Activated T-helper 1 cell treated with anti-CD3 and anti-CD28 coated beads, Interleukin-12 subunit alpha, Interleukin-12 subunit beta, Interleukin-2, Interleukin-4 antibody, amounts not matched to agents 30 ng/mL and 10 ng/mL and 1 ng/mL, durations not matched to agents 14 hours and 24 hours and 36 hours (primary cell): ENCODE measurements at regions of chr2 and their contacts with region 1.

Region 1: DNA sequence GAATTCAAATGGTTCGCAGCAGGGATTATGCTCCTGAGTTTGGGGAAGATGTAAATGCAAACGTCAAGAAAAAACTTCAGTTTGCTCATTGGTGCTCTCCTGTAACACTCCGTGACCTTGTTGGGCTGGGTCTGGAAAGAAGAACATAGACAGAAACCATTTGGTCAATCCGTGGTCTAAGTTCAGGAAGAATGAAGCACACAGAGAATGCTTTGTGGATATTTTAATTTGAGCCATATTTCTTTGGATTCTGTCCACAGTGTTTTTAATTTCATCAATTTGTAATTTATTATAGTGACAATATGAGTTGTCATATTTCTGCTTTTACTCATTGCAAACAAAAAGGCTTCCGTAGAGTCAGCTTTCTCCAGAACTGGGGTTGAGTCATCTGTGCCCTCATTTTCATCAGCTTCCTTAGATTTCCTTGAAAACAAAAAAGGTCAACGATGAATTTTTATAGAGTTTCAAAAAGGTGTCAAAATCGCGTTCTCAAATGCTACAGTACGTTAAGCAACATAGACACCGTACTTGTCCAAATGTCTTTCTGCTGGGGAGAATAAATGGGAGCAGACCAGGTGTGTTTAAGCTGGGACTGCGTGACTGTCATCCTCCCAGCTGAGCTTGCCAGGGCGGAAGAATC is 606.4 kb downstream of the RNF144A start:
- DNase-seq: no peak
- H3K4me3 Mint-ChIP-seq: peak overlapping the region; percentile 2
- H3K27ac Mint-ChIP-seq: peak overlapping the region; percentile 90
- H3K4me1 Mint-ChIP-seq: peaks cover 77% of the 10 kb centered on the region
- H3K27me3 Mint-ChIP-seq: no peaks in the 10 kb centered on the region

Region 2: DNA sequence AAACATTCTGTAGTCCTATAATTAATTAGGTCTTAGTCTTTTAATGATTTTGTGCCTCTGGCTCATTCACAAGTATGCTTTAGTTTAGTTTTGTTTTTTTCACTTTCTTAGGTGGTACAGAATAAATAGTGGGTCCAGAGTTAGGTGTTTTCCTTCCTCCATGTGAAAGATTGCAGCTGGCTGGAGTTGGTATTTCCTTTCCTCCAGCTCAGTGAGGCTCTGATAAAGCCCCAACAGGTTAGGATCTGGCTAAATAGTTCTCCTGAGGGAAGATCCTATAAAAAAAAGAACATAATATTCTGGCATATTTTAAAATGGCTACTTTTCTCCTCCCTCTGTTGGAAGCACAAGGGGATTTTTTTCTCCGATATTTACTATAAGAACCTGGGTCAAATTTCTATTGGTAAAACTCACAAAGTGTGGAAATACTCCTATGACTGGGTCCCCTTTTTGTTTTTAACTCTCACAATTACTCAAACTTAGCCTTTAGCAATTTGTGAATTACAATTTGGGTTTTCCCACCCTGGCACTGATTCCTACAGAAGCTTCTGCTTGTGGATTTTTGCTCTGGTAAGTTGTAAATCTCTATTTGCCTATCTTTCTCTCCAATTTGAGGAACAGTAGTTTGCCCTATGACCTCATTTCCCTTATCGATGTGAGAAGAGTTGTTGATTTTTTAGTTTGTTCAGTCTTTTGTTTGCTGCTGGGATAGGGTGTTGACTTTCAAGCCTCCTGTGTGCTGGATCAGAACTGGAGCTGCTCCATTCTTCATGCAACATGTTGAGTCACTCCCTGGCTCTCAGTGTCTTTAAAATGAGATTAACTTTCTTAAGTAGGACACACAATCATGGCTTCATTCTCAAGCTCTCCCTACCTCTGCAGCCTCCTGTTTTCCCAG is 105.5 kb before region 1 on chr2:
- intact Hi-C with region 1: no loop called
- DNase-seq: no peak
- H3K4me3 Mint-ChIP-seq: no peak overlapping the region
- H3K27ac Mint-ChIP-seq: no peak overlapping the region
- H3K4me1 Mint-ChIP-seq: no peaks in the 10 kb centered on the region
- H3K27me3 Mint-ChIP-seq: peaks cover 22% of the 10 kb centered on the region

Region 3: DNA sequence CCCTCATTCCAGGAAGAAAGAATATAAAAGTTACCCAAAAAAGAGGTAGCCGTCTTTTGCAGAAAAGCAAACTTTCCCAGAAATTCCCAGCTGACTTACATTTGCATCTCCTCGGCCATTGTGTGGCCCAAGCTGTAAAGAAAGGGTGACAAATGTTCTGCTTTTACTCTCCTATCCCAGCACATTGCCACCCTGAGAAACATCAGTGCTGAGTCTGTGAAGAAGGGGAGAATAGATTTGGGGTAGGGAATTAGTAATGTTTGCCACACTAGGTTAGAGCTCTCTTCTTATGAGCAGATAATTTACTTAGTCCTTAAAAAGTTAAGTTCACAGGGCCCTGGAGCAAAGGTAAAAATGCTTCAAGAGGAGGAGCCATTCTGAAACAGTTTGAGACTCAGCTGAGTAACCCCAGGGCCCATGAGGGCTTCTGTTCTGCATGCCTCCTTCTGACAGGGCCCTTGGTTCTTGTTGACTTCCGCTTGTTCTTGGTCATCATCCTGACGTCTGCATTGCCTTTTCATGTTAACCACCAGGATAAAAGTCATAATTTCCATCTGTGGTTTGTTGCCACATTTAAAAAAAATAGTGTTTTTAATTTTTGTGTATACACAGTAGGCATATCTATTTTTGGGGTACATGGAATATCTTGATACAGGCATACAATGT is 55.7 kb before region 1 on chr2:
- intact Hi-C with region 1: loop called (anchors 1 kb)
- DNase-seq: peak; percentile 44
- H3K4me3 Mint-ChIP-seq: peak overlapping the region; percentile 50
- H3K27ac Mint-ChIP-seq: peak overlapping the region; percentile 91
- H3K4me1 Mint-ChIP-seq: peaks cover 51% of the 10 kb centered on the region
- H3K27me3 Mint-ChIP-seq: no peaks in the 10 kb centered on the region

Region 4: GRCh38 chr2:7588295-7588694 is 64.7 kb after region 1 on chr2:
- intact Hi-C with region 1: loop called (anchors 2 kb)
- DNase-seq: no peak
- H3K4me3 Mint-ChIP-seq: peak overlapping the region; percentile 28
- H3K27ac Mint-ChIP-seq: peak overlapping the region; percentile 61
- H3K4me1 Mint-ChIP-seq: peaks cover 37% of the 10 kb centered on the region
- H3K27me3 Mint-ChIP-seq: no peaks in the 10 kb centered on the region

Region 5: DNA sequence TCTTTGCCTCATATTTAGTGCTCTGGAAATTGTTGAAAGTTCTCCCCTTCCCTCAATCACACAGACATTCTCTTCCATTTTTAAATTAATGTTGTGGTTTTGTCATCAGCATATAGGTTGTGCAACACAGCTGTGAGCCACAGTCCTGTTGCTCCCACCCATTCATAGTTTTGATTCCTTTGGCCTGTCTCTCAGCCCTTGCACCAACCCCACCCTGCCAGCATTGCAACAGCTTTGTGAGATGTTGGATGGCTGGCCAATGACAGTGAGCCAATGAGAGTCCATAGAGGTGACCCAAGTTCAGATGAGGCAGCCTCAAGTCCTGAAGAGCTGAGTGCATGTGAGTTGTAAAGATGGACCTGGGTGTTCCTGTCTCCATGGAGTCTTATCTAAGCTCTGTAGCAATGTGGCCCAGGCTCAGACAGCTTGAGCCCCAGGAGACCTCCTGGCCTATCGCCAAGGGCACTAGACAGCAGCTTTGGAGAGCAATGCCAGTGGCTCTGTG is 169.1 kb after region 1 on chr2:
- intact Hi-C with region 1: loop called (anchors 1 kb)
- DNase-seq: no peak
- H3K4me3 Mint-ChIP-seq: peak overlapping the region; percentile 48
- H3K27ac Mint-ChIP-seq: peak overlapping the region; percentile 94
- H3K4me1 Mint-ChIP-seq: peaks cover 51% of the 10 kb centered on the region
- H3K27me3 Mint-ChIP-seq: no peaks in the 10 kb centered on the region

Region 6: DNA sequence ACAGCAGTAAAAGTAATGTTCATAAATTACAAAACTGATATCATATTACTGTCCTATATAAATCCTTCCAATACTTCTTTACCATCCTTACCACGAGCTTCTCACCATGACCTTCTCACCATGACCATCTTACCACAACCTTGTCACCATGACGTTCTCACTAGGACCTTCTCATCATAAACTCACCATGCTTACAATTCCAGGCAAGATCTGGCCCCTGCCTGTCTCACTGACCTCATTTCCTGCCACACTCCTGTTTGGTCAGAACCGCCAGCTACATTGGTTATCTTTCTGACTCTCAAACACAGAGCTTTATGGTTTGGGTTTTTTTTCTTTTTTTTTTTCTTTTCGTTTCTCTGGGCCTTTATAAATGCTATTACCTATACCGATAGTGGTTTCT is 221.2 kb after region 1 on chr2:
- intact Hi-C with region 1: loop called (anchors 5 kb)
- DNase-seq: peak; percentile 35
- H3K4me3 Mint-ChIP-seq: peak overlapping the region; percentile 8
- H3K27ac Mint-ChIP-seq: peak overlapping the region; percentile 81
- H3K4me1 Mint-ChIP-seq: peaks cover 44% of the 10 kb centered on the region
- H3K27me3 Mint-ChIP-seq: no peaks in the 10 kb centered on the region